ENCODE measurements at regions of chr3 and their contacts with region 1.

Region 1: GRCh38 chr3:179768080-179768479 is 115.2 kb downstream of the USP13 start:
- DNase-seq: peak; percentile 69
- H3K4me3 Mint-ChIP-seq: no peak overlapping the region
- H3K27ac Mint-ChIP-seq: no peak overlapping the region
- H3K4me1 Mint-ChIP-seq: no peaks in the 10 kb centered on the region
- H3K27me3 Mint-ChIP-seq: no peaks in the 10 kb centered on the region
- CTCF ChIP-seq: peak; percentile 60

Region 2: GRCh38 chr3:179589143-179589542 is 178.9 kb before region 1 on chr3:
- CTCF ChIA-PET with region 1: no interaction called
- POLR2A ChIA-PET with region 1: no interaction called
- intact Hi-C with region 1: no loop called
- DNase-seq: no peak
- H3K4me3 Mint-ChIP-seq: no peak overlapping the region
- H3K27ac Mint-ChIP-seq: no peak overlapping the region
- H3K4me1 Mint-ChIP-seq: no peaks in the 10 kb centered on the region
- H3K27me3 Mint-ChIP-seq: no peaks in the 10 kb centered on the region
- CTCF ChIP-seq: no peak

Region 3: DNA sequence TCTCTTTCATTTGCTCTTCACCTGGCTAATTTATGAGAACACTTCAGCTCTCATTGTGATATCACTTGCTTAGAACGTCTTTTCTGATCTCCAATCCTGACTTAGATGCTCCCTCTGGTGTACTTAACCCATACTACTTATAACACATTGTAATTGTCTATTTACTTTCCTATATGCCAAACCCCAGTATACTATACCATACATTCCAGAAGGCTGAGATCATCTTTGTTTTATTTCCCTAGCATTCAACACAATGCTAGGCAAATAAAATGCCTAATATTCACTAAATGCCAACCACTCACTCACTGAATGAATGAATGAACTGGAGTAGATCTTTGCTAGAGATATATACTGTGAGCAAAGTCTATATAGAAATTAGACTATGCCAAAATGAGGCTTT is 295.7 kb after region 1 on chr3:
- CTCF ChIA-PET with region 1: no interaction called
- POLR2A ChIA-PET with region 1: no interaction called
- intact Hi-C with region 1: loop called (anchors 10 kb)
- DNase-seq: peak; percentile 23
- H3K4me3 Mint-ChIP-seq: no peak overlapping the region
- H3K27ac Mint-ChIP-seq: no peak overlapping the region
- H3K4me1 Mint-ChIP-seq: peaks cover 11% of the 10 kb centered on the region
- H3K27me3 Mint-ChIP-seq: no peaks in the 10 kb centered on the region
- CTCF ChIP-seq: no peak

Region 4: DNA sequence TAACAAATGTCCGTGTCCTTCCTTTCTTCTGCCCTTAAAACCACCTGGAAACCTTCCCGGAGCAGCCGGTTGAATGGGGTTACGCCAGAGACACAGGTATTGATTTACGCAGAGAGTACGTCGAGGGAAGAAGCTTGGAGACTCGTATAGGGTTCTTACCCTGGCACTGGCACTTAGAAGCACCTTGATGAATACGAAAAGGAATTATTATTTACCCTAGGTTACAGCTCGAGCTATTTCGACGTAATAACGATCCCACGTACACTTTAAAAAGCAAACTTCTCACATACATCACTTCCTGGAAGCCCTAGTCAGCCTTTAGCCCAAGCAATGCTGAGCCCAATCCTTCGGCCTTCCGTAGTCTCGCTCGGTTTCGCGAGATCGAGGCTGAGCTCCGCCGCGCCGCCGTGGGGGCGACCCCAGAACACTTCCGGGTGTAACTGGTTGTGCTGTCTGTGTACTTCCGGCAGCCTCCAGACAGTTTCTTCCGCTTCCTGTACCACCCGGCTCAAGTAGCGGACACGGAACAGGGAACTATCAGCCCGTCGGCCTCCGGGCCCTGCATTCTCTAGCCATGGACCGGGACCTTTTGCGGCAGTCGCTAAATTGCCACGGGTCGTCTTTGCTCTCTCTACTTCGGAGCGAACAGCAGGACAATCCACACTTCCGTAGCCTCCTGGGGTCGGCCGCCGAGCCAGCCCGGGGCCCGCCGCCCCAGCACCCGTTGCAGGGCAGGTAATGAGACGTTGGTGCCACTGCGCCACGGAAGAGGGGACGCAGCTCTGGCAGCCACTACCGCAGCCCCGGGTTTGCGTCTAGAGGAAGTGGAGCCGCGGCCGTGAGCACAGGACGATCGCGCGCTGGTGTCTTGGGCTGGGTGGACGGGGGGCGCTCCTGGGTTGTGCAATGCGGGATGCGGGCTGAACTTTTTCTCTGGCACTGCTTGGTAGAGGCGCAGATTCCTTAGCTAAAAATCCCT is 833.9 kb after region 1 on chr3 and contains the start of gene TTC14:
- CTCF ChIA-PET with region 1: interaction called, 4 read pairs
- POLR2A ChIA-PET with region 1: interaction called, 3 read pairs
- intact Hi-C with region 1: loop called (anchors 2 kb)
- DNase-seq: peak; percentile 93
- H3K4me3 Mint-ChIP-seq: peak within 1 kb of the TSS; percentile 94
- H3K27ac Mint-ChIP-seq: peak within 1 kb of the TSS; percentile 95
- H3K4me1 Mint-ChIP-seq: peaks cover 11% of the 10 kb centered on the region
- H3K27me3 Mint-ChIP-seq: no peaks in the 10 kb centered on the region
- CTCF ChIP-seq: no peak
- total RNA-seq, gene TTC14: 35.8 and 41.9 TPM in 2 replicates

Measured in MCF 10A (cell line).